Vagina (tissue), 2 donors: ENCODE measurements at regions of chr6 and their contacts with region 1.

Region 1: DNA sequence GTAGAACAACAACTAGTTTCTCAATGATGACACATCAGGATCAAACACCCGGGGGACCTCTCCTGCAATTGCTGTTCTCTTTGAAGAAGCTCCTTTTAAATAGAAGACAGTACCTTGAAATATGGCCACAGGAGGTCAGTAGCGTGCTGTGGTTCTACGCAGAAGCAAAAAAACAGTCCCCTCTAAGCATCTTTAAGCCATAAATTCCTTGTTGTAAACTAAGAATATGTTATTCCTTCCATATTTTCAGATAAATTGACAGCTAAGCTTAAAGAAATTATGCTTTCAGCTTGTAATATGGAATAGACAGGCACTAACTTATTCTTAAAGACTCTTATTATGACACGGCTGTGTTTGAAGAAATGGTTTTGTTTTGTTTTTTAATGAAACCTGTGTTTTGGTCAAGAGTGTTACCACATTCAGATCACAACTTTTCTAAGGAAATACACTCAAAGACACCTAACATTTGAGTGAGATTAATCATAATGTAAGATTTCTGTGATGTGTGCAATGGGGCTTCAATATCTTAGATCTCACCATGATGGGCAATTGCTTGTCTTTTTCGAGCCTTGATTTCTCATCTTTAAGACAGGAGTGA is 49.7 kb upstream of the IL20RA start:
- DNase-seq: no peak
- H3K4me3 ChIP-seq: no peak overlapping the region
- H3K27ac ChIP-seq: no peak overlapping the region
- H3K4me1 ChIP-seq: no peaks in the 10 kb centered on the region
- H3K27me3 ChIP-seq: no peaks in the 10 kb centered on the region
- CTCF ChIP-seq: peak; percentile 72 to 84 (median 74)
- POLR2A ChIP-seq: no peak

Region 2: GRCh38 chr6:136658711-136659110 is 435.8 kb before region 1 on chr6:
- intact Hi-C with region 1: no loop called
- DNase-seq: no peak
- H3K4me3 ChIP-seq: no peak overlapping the region
- H3K27ac ChIP-seq: no peak overlapping the region
- H3K4me1 ChIP-seq: no peaks in the 10 kb centered on the region
- H3K27me3 ChIP-seq: no peaks in the 10 kb centered on the region
- CTCF ChIP-seq: no peak
- POLR2A ChIP-seq: no peak

Region 3: GRCh38 chr6:137313928-137314855 is 219.7 kb after region 1 on chr6:
- intact Hi-C with region 1: loop called (anchors 10 kb)
- DNase-seq: no peak
- H3K4me3 ChIP-seq: no peak overlapping the region
- H3K27ac ChIP-seq: no peak overlapping the region
- H3K4me1 ChIP-seq: peaks cover 5% of the 10 kb centered on the region
- H3K27me3 ChIP-seq: no peaks in the 10 kb centered on the region
- CTCF ChIP-seq: peak; percentile 42 to 86 (median 69)
- POLR2A ChIP-seq: no peak

Region 4: GRCh38 chr6:137512757-137513605 is 418.5 kb after region 1 on chr6:
- intact Hi-C with region 1: loop called (anchors 5 kb)
- DNase-seq: no peak
- H3K4me3 ChIP-seq: no peak overlapping the region
- H3K27ac ChIP-seq: no peak overlapping the region
- H3K4me1 ChIP-seq: no peaks in the 10 kb centered on the region
- H3K27me3 ChIP-seq: no peaks in the 10 kb centered on the region
- CTCF ChIP-seq: no peak
- POLR2A ChIP-seq: no peak

Region 5: GRCh38 chr6:137641474-137642077 is 547.1 kb after region 1 on chr6:
- intact Hi-C with region 1: loop called (anchors 10 kb)
- DNase-seq: no peak
- H3K4me3 ChIP-seq: no peak overlapping the region
- H3K27ac ChIP-seq: no peak overlapping the region
- H3K4me1 ChIP-seq: peaks cover 6% of the 10 kb centered on the region
- H3K27me3 ChIP-seq: no peaks in the 10 kb centered on the region
- CTCF ChIP-seq: peak in 2 of 3 experiments; percentile 54 to 62
- POLR2A ChIP-seq: no peak